ENCODE measurements at regions of chr5 and their contacts with region 1.

Region 1: GRCh38 chr5:157948738-157949410 is 89.9 kb upstream of the CLINT1 start:
- DNase-seq: peak; percentile 98
- H3K4me3 Mint-ChIP-seq: peak overlapping the region; percentile 26
- H3K27ac Mint-ChIP-seq: peak overlapping the region; percentile 32
- H3K4me1 Mint-ChIP-seq: peaks cover 8% of the 10 kb centered on the region
- H3K27me3 Mint-ChIP-seq: no peaks in the 10 kb centered on the region
- CTCF ChIP-seq: peak; percentile 91

Region 2: DNA sequence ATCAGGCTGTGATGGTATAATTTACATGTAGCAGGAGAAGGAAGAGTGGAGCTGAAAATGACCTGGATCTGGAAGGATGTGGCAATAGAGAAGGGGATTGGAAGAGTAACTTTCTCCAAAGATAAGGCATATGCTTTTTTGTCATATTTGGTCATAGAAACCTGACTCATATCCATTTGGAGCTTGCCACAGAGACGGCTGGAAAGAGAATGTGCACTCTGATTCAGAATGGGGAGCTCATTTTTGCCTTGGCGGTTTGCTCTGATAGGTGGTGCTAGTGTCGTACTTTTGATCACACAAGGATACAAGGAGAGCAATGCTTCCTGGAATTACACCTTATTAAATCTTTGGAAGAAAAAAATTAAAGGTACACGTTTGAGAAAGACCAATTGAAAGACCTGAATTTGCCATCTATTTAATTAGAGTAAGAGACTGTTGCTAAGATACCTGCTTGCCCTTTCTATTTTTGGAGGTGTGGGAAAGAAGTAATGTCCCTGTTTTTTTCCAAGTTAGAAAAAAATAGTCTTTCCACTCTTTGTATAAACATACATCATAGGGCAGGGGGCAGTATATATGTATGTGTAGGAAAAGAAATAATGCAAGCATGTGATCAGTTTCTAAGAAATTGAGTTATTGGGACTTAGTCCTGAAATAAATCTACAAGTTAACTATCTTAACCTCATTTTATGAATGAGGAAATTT is 200.0 kb before region 1 on chr5:
- CTCF ChIA-PET with region 1: interaction called, 15 read pairs
- POLR2A ChIA-PET with region 1: no interaction called
- intact Hi-C with region 1: no loop called
- DNase-seq: peak; percentile 87
- H3K4me3 Mint-ChIP-seq: peak overlapping the region; percentile 10
- H3K27ac Mint-ChIP-seq: peak overlapping the region; percentile 70
- H3K4me1 Mint-ChIP-seq: peaks cover 40% of the 10 kb centered on the region
- H3K27me3 Mint-ChIP-seq: no peaks in the 10 kb centered on the region
- CTCF ChIP-seq: no peak

Region 3: DNA sequence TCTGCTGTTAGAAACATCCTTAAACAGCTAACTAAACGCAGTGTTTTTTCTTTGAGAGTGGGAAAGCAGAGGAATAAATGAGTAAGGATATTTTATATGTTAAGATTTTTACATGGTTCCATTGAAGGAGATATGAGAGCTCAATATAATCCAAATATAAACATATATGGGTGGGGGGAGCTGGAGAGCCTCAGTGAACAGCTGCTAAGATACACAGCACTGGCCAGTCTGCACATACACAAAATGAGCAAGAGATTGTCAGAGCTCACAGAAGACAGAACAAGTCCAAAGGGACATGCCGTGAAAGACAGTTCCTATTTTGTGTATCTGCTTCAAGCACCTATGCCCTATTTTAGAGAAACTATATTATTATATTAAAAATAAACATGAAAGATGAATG is 136.8 kb before region 1 on chr5:
- CTCF ChIA-PET with region 1: interaction called, 101 read pairs
- POLR2A ChIA-PET with region 1: interaction called, 3 read pairs
- intact Hi-C with region 1: loop called (anchors 1 kb)
- DNase-seq: no peak
- H3K4me3 Mint-ChIP-seq: no peak overlapping the region
- H3K27ac Mint-ChIP-seq: no peak overlapping the region
- H3K4me1 Mint-ChIP-seq: no peaks in the 10 kb centered on the region
- H3K27me3 Mint-ChIP-seq: no peaks in the 10 kb centered on the region
- CTCF ChIP-seq: no peak

Region 4: GRCh38 chr5:157842185-157842584 is 106.7 kb before region 1 on chr5:
- CTCF ChIA-PET with region 1: interaction called, 22 read pairs
- POLR2A ChIA-PET with region 1: no interaction called
- intact Hi-C with region 1: no loop called
- DNase-seq: no peak
- H3K4me3 Mint-ChIP-seq: no peak overlapping the region
- H3K27ac Mint-ChIP-seq: no peak overlapping the region
- H3K4me1 Mint-ChIP-seq: peaks cover 10% of the 10 kb centered on the region
- H3K27me3 Mint-ChIP-seq: no peaks in the 10 kb centered on the region
- CTCF ChIP-seq: no peak

Region 5: DNA sequence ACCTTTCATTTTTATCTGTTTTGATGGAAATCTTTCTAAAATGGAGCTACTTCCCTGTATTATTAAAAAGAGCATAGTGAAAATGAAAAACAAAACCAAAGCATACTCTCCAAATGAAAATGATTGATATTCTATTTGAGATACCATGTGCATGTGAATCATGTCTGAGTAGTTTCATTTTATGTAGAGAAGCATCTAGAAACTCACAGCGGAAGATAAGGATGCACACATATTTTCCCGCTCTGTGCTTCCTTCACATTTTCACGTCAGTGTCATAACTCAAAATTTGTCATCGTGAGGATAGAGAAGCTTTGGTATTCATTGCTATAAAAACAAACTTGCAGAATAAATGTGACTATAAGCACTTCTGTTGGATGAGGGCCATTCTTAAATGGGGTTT is 55.9 kb before region 1 on chr5:
- CTCF ChIA-PET with region 1: interaction called, 10 read pairs
- POLR2A ChIA-PET with region 1: no interaction called
- intact Hi-C with region 1: no loop called
- DNase-seq: no peak
- H3K4me3 Mint-ChIP-seq: no peak overlapping the region
- H3K27ac Mint-ChIP-seq: no peak overlapping the region
- H3K4me1 Mint-ChIP-seq: peaks cover 13% of the 10 kb centered on the region
- H3K27me3 Mint-ChIP-seq: no peaks in the 10 kb centered on the region
- CTCF ChIP-seq: no peak

Region 6: GRCh38 chr5:157930710-157931109 is 18.2 kb before region 1 on chr5:
- CTCF ChIA-PET with region 1: interaction called, 34 read pairs
- POLR2A ChIA-PET with region 1: interaction called, 5 read pairs
- intact Hi-C with region 1: no loop called
- DNase-seq: no peak
- H3K4me3 Mint-ChIP-seq: no peak overlapping the region
- H3K27ac Mint-ChIP-seq: no peak overlapping the region
- H3K4me1 Mint-ChIP-seq: no peaks in the 10 kb centered on the region
- H3K27me3 Mint-ChIP-seq: no peaks in the 10 kb centered on the region
- CTCF ChIP-seq: no peak

Region 7: DNA sequence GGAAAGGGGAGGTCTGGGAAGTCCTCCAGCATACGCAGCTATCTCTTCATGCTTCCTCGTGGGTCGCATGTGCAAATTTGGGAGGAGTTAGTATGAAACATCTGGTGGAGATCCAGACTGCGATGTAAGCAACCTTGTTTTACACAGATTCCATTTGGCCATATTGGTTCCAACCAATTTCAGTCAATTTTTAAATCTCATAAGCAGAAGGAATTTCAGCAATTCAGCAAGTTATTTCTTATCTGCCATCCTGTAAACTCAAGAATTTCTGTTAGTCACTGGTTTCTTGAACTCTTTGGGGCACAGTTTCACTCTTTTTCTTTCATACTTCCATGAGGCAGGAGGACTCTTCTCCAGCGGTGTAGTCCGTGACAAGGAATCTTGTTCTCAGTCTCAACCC is 40.4 kb after region 1 on chr5:
- CTCF ChIA-PET with region 1: interaction called, 94 read pairs
- POLR2A ChIA-PET with region 1: no interaction called
- intact Hi-C with region 1: loop called (anchors 2 kb)
- DNase-seq: no peak
- H3K4me3 Mint-ChIP-seq: no peak overlapping the region
- H3K27ac Mint-ChIP-seq: no peak overlapping the region
- H3K4me1 Mint-ChIP-seq: no peaks in the 10 kb centered on the region
- H3K27me3 Mint-ChIP-seq: no peaks in the 10 kb centered on the region
- CTCF ChIP-seq: no peak

Region 8: DNA sequence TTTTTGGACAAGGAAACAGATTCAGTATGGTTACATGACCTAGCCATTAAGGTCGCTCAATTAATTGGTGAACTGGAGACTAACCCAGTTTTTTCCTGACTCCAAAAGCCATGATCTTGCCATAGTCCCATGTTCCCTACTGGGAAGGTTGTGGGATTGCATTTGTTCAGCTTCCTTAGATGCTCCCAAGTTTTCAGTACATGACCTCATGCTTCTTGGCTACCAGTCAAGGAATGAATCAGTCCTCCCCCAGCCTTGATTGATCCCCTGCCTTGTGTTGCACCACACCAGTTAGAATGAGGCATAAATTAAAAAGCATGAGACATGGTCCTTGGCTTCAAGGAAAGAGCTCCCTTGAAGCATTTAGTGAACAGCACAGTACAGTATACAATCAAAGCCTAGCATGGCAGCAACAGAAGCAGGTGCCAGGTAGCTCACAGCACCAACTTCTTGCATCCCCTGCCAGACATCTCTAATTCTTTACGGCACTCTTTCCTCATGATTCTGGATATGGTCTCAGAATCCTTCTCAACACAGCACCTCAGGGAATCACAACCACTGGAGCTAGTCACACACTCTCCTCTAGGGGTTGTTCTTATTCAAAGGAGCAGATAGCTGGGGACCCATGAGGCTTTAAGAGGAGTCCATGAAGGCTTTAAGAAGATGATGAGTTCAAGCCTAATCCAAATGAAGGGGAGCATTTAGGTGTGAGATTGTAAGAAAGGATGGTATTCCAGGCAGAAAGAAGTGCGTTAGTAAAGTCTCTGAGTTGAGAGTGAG is 205.5 kb after region 1 on chr5:
- CTCF ChIA-PET with region 1: no interaction called
- POLR2A ChIA-PET with region 1: no interaction called
- intact Hi-C with region 1: no loop called
- DNase-seq: peak; percentile 98
- H3K4me3 Mint-ChIP-seq: no peak overlapping the region
- H3K27ac Mint-ChIP-seq: no peak overlapping the region
- H3K4me1 Mint-ChIP-seq: peaks cover 12% of the 10 kb centered on the region
- H3K27me3 Mint-ChIP-seq: no peaks in the 10 kb centered on the region
- CTCF ChIP-seq: no peak

Region 9: DNA sequence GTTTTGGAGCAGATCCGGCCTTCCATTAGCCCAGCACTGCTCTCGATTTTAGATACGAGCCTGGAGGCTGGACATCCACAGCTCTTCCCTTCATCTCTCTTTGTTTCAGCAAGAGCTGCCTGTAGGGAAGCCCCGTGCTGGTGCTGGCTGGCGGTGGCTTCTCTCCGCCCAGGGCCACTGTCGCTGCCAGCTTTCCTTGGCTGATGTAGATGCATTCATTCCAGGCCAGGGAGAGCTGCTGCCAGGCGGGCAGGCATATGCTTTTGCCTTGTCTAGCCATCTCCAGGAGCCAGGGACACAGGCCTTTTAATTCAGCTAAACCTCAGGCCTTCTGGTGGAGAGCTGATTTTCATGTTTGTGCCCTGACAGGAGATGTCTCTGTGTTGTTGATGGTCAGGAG is 319.4 kb after region 1 on chr5:
- CTCF ChIA-PET with region 1: no interaction called
- POLR2A ChIA-PET with region 1: no interaction called
- intact Hi-C with region 1: no loop called
- DNase-seq: no peak
- H3K4me3 Mint-ChIP-seq: no peak overlapping the region
- H3K27ac Mint-ChIP-seq: no peak overlapping the region
- H3K4me1 Mint-ChIP-seq: no peaks in the 10 kb centered on the region
- H3K27me3 Mint-ChIP-seq: no peaks in the 10 kb centered on the region
- CTCF ChIP-seq: no peak